CD4-positive, alpha-beta memory T cell (primary cell): ENCODE measurements at regions of chr2 and their contacts with region 1.

Region 1: GRCh38 chr2:200575957-200576356 is 9.9 kb upstream of the AOX1 start:
- DNase-seq: peak in 3 of 5 donors; percentile 10 to 23 (median 18)
- H3K4me3 ChIP-seq: no peak overlapping the region
- H3K4me3 Mint-ChIP-seq: no peak overlapping the region
- H3K27ac ChIP-seq: no peak overlapping the region
- H3K27ac Mint-ChIP-seq: peak overlapping the region in 1 of 7 donors; percentile 14
- H3K4me1 ChIP-seq: no peaks in the 10 kb centered on the region
- H3K4me1 Mint-ChIP-seq: peaks cover 0 to 4% (median under 1%) of the 10 kb centered on the region in 4 donors
- H3K27me3 ChIP-seq: no peaks in the 10 kb centered on the region
- H3K27me3 Mint-ChIP-seq: no peaks in the 10 kb centered on the region

Region 2: GRCh38 chr2:200533754-200534153 is 42.2 kb before region 1 on chr2:
- CTCF ChIA-PET with region 1: no interaction called
- POLR2A ChIA-PET with region 1: no interaction called
- intact Hi-C with region 1: no loop called
- DNase-seq: no peak
- H3K4me3 ChIP-seq: no peak overlapping the region
- H3K4me3 Mint-ChIP-seq: no peak overlapping the region
- H3K27ac ChIP-seq: no peak overlapping the region
- H3K27ac Mint-ChIP-seq: no peak overlapping the region
- H3K4me1 ChIP-seq: no peaks in the 10 kb centered on the region
- H3K4me1 Mint-ChIP-seq: no peaks in the 10 kb centered on the region
- H3K27me3 ChIP-seq: no peaks in the 10 kb centered on the region
- H3K27me3 Mint-ChIP-seq: no peaks in the 10 kb centered on the region

Region 3: DNA sequence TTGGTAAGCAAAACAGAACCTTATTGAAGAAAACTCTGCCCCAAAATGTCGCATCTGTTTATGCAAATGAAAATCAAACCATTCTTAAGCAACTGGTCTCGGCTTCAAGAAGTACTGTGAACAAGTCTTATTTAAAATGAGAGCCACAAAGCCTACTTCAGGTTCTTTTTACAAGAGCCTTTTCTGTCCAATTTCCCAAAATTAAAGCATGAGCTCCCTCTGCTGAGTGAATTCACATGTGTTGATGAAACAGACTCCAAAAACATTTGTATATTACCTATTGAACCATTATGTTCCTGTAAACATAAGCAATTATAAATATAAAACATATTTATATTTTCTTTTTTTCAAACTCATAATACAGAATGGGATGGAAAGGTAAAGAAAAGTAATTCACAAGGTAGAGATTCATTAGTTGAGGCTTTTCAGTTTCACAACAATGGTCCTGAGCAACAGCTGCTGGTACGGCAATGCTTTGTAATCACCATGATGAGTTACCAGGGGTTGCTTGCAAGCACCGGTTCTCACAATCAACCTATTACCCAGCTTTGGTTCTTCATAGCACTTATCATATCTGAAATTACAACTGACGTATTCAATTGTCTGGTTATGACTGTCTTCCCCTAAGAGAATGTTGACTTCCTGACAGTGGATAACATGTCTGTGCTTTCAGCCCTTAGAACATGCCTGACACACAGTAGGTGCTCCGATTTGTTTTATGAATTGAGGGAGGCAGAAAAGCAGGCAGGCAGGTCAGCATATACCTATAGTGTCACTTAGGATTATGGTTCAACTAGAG is 127.4 kb after region 1 on chr2:
- CTCF ChIA-PET with region 1: no interaction called
- POLR2A ChIA-PET with region 1: no interaction called
- intact Hi-C with region 1: loop called (anchors 1 kb)
- DNase-seq: peak in 4 of 5 donors; percentile 26 to 32 (median 28)
- H3K4me3 ChIP-seq: no peak overlapping the region
- H3K4me3 Mint-ChIP-seq: peak overlapping the region in 2 of 8 donors; percentile 2 to 11
- H3K27ac ChIP-seq: no peak overlapping the region
- H3K27ac Mint-ChIP-seq: peak overlapping the region in 4 of 7 donors; percentile 3 to 83 (median 49)
- H3K4me1 ChIP-seq: peaks cover 11% of the 10 kb centered on the region
- H3K4me1 Mint-ChIP-seq: peaks cover 8 to 11% (median 9%) of the 10 kb centered on the region in 4 donors
- H3K27me3 ChIP-seq: no peaks in the 10 kb centered on the region
- H3K27me3 Mint-ChIP-seq: peaks cover 0 to 5% of the 10 kb centered on the region in 2 donors

Region 4: GRCh38 chr2:200735061-200735460 is 159.1 kb after region 1 on chr2:
- CTCF ChIA-PET with region 1: no interaction called
- POLR2A ChIA-PET with region 1: no interaction called
- intact Hi-C with region 1: loop called (anchors 1 kb)
- DNase-seq: no peak
- H3K4me3 ChIP-seq: no peak overlapping the region
- H3K4me3 Mint-ChIP-seq: no peak overlapping the region
- H3K27ac ChIP-seq: no peak overlapping the region
- H3K27ac Mint-ChIP-seq: peak overlapping the region in 1 of 7 donors; percentile 3
- H3K4me1 ChIP-seq: no peaks in the 10 kb centered on the region
- H3K4me1 Mint-ChIP-seq: no peaks in the 10 kb centered on the region
- H3K27me3 ChIP-seq: no peaks in the 10 kb centered on the region
- H3K27me3 Mint-ChIP-seq: peaks cover 11 to 12% of the 10 kb centered on the region in 2 donors

Region 5: GRCh38 chr2:200765139-200765951 is 189.4 kb after region 1 on chr2:
- CTCF ChIA-PET with region 1: no interaction called
- POLR2A ChIA-PET with region 1: no interaction called
- intact Hi-C with region 1: no loop called
- DNase-seq: peak in 1 of 5 donors; percentile 56
- H3K4me3 ChIP-seq: no peak overlapping the region
- H3K4me3 Mint-ChIP-seq: no peak overlapping the region
- H3K27ac ChIP-seq: no peak overlapping the region
- H3K27ac Mint-ChIP-seq: no peak overlapping the region
- H3K4me1 ChIP-seq: no peaks in the 10 kb centered on the region
- H3K4me1 Mint-ChIP-seq: peaks cover 0 to 5% (median under 1%) of the 10 kb centered on the region in 4 donors
- H3K27me3 ChIP-seq: no peaks in the 10 kb centered on the region
- H3K27me3 Mint-ChIP-seq: peaks cover 3 to 4% of the 10 kb centered on the region in 2 donors